ENCODE measurements at regions of chr19 and their contacts with region 1.

Region 1: GRCh38 chr19:55599468-55600279 is at the start of gene FIZ1:
- DNase-seq: peak; percentile 94
- H3K4me3 Mint-ChIP-seq: peak within 1 kb of the TSS; percentile 96
- H3K27ac Mint-ChIP-seq: peak within 1 kb of the TSS; percentile 98
- H3K4me1 Mint-ChIP-seq: peaks cover 24% of the 10 kb centered on the region
- H3K27me3 Mint-ChIP-seq: no peaks in the 10 kb centered on the region
- total RNA-seq, gene FIZ1: 18.2 and 18.9 TPM in 2 replicates

Region 2: DNA sequence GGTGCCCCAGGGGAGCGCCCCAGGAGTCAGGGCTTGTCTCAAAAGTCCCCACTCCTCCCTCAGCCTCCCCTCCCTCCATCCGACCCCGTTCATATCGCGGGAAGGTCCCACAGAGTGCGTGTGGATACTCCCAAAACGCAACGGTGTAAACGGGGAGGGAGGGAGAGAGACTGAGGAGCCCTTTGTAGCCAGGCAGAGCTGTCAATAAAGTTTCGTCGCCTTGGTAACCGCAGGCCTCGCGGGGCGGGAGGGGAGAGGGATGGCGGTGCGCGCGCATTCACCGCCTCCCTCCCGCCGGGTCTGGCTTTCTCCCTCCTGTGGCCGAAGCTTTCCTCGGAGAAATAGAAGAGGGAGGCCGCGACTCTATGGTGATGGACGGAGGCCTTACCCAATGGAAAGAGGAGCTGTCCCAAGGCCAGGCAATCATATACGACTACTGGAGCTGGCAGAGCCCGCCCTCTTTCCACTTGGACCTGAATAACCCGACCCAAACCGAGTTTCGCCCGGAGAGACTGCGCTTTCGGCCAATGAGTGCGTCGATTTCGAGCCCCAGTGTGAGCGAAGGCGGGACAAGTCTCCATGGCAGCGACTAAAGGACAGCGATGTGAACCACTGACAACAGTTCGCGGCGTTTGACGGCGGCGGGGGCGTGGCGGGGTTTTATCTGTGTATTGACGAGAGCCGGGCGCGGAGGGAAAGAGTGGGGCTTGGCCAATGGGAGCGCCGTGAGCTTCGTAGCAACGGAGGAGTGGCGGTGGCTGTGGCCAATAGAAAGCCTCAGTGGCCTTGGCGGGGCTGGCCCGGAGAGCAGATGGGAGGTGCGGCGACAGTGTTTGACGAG is 260.4 kb before region 1 on chr19 and contains the start of gene KMT5C:
- intact Hi-C with region 1: loop called (anchors 1 kb)
- DNase-seq: peak; percentile 100
- H3K4me3 Mint-ChIP-seq: peak within 1 kb of the TSS; percentile 93
- H3K27ac Mint-ChIP-seq: peak within 1 kb of the TSS; percentile 95
- H3K4me1 Mint-ChIP-seq: peaks cover 14% of the 10 kb centered on the region
- H3K27me3 Mint-ChIP-seq: peaks cover 2% of the 10 kb centered on the region
- total RNA-seq, gene KMT5C: 34.3 and 35.3 TPM in 2 replicates

Region 3: GRCh38 chr19:55476100-55476775 is 123.4 kb before region 1 on chr19 and contains the start of gene ZNF628:
- intact Hi-C with region 1: loop called (anchors 1 kb)
- DNase-seq: peak; percentile 96
- H3K4me3 Mint-ChIP-seq: peak within 1 kb of the TSS; percentile 88
- H3K27ac Mint-ChIP-seq: peak within 1 kb of the TSS; percentile 90
- H3K4me1 Mint-ChIP-seq: peaks cover 20% of the 10 kb centered on the region
- H3K27me3 Mint-ChIP-seq: no peaks in the 10 kb centered on the region
- total RNA-seq, gene ZNF628: 8.6 and 9.5 TPM in 2 replicates

Region 4: DNA sequence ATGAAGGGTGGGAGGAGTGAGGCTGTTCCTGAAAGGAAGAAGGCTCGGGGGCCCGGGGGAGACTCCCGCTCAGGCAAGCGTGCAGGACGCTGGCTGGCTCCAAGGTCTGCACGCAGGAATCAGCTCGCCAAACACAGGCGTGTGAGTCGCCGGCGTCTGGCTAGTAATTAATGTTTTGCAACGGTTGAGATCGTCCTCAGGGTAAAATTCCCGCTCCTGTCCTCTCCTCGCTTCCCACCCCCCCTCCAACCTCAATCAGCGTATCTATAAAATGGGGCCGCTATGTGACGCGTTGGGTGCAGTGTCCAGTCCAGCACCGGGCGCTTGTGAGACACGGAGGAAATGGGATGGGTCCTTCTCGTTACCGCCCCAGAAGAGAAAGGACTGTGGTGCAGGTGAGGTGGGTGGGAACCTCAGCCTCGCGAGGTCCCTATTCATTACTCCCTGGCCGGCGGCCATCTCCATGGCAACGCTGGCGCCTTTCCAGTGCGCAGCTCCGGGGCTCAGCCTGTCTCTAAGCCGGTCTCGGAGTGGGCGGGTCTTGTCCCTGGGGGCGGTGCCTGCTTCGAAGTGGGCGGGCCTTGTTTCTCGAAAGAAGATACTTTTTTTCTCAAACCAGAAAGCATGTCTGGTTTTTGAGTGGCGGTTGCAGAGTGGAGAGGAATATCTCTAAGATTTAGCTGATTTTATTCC is 12.6 kb before region 1 on chr19:
- intact Hi-C with region 1: loop called (anchors 1 kb)
- DNase-seq: peak; percentile 86
- H3K4me3 Mint-ChIP-seq: peak overlapping the region; percentile 75
- H3K27ac Mint-ChIP-seq: no peak overlapping the region
- H3K4me1 Mint-ChIP-seq: peaks cover 13% of the 10 kb centered on the region
- H3K27me3 Mint-ChIP-seq: peaks cover 13% of the 10 kb centered on the region

Region 5: GRCh38 chr19:55643348-55644176 is 43.9 kb after region 1 on chr19 and contains the start of gene ZNF581:
- intact Hi-C with region 1: loop called (anchors 1 kb)
- DNase-seq: peak; percentile 77
- H3K4me3 Mint-ChIP-seq: peak within 1 kb of the TSS; percentile 99
- H3K27ac Mint-ChIP-seq: peak within 1 kb of the TSS; percentile 97
- H3K4me1 Mint-ChIP-seq: peaks cover 36% of the 10 kb centered on the region
- H3K27me3 Mint-ChIP-seq: no peaks in the 10 kb centered on the region
- total RNA-seq, gene ZNF581: 26.6 and 27.0 TPM in 2 replicates

Region 6: GRCh38 chr19:55688422-55689246 is 89.0 kb after region 1 on chr19:
- intact Hi-C with region 1: no loop called
- DNase-seq: no peak
- H3K4me3 Mint-ChIP-seq: no peak overlapping the region
- H3K27ac Mint-ChIP-seq: peak overlapping the region; percentile 22
- H3K4me1 Mint-ChIP-seq: no peaks in the 10 kb centered on the region
- H3K27me3 Mint-ChIP-seq: no peaks in the 10 kb centered on the region

Measured in activated T-helper 2 cell treated with anti-CD3 and anti-CD28 coated beads, Interferon-gamma antibody, Interleukin-2, Interleukin-4, amounts not matched to agents 10 μg/mL and 5 μg/mL and 100 μg/mL, durations not matched to agents 14 hours and 24 hours and 36 hours (primary cell).